ENCODE measurements at regions of chr16 and their contacts with region 1.

Region 1: DNA sequence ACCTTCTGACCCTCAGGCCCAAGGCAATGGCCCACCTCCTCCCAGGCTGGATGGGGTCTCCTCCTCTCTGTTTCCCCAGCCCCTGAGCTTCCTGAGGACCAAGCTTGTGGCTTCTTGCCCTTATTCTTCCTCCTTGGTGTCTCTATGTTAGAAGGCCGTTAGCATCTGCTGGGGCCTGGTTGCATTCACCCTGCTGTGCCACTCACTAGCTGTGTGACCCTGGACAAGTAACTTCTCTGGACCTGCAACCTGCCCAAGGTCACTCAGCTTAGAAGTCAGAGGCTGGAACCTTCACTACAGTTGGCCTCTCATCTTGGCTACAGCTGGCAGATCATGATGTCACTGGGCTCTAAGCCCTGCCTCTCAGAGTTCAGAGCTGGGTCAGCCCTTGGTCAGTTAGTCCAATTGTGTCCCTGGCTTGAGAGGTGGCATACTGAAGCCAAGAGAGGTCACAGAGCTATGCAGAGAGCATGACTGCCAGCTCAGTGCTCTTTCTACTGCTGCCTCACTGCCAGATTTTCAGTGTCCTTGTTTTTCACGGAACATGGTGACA is 3.0 kb downstream of the MT2A start:
- DNase-seq: no peak
- H3K4me3 Mint-ChIP-seq: no peak overlapping the region
- H3K27ac Mint-ChIP-seq: peak overlapping the region; percentile 96
- H3K4me1 Mint-ChIP-seq: peaks cover 64% of the 10 kb centered on the region
- H3K27me3 Mint-ChIP-seq: no peaks in the 10 kb centered on the region

Region 2: DNA sequence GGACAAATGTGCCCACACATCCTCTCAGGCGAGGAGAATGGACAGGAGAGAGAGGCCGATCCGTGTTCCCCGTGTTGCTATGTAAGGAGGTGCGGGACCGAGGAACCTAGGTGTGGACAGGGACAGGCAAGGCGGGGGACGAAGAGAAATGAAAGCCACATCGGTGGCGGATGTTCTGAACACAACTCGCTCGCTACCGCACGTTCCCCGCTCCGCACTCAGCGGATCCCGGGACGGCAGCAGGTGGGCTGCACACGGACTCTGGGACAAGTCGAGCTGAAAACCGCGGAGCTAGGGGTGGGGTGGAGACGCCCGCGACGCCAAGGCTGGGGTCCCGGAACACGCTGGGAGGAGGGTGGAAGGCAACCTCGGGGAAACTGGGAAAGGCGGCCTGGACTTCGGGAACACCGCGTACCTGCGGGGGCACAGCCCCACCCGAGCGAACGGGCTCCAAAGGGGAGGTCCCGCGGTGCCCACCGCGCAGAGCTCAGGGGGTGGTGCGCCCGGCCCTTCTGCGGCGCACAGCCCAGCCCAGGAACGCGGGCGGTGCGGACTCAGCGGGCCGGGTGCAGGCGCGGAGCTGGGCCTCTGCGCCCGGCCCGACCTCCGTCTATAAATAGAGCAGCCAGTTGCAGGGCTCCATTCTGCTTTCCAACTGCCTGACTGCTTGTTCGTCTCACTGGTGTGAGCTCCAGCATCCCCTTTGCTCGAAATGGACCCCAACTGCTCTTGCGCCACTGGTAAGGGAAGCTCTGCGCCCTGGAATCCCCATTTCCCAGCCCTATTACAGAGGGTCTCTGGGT is 14.0 kb after region 1 on chr16 and contains the start of gene MT1E:
- CTCF ChIA-PET with region 1: interaction called, 11 read pairs
- POLR2A ChIA-PET with region 1: interaction called, 3 read pairs
- DNase-seq: peak; percentile 76
- H3K4me3 Mint-ChIP-seq: peak within 1 kb of the TSS; percentile 90
- H3K27ac Mint-ChIP-seq: peak within 1 kb of the TSS; percentile 94
- H3K4me1 Mint-ChIP-seq: peaks cover 26% of the 10 kb centered on the region
- H3K27me3 Mint-ChIP-seq: peaks cover 21% of the 10 kb centered on the region
- total RNA-seq, gene MT1E: 100 to 154 TPM

Measured in activated CD4-positive, alpha-beta T cell treated with anti-CD3 and anti-CD28 coated beads, Interleukin-2, amount 10 ng/mL, durations not matched to agents 7 days and 5 days (primary cell).